ENCODE measurements at regions of chr6 and their contacts with region 1.

Region 1: DNA sequence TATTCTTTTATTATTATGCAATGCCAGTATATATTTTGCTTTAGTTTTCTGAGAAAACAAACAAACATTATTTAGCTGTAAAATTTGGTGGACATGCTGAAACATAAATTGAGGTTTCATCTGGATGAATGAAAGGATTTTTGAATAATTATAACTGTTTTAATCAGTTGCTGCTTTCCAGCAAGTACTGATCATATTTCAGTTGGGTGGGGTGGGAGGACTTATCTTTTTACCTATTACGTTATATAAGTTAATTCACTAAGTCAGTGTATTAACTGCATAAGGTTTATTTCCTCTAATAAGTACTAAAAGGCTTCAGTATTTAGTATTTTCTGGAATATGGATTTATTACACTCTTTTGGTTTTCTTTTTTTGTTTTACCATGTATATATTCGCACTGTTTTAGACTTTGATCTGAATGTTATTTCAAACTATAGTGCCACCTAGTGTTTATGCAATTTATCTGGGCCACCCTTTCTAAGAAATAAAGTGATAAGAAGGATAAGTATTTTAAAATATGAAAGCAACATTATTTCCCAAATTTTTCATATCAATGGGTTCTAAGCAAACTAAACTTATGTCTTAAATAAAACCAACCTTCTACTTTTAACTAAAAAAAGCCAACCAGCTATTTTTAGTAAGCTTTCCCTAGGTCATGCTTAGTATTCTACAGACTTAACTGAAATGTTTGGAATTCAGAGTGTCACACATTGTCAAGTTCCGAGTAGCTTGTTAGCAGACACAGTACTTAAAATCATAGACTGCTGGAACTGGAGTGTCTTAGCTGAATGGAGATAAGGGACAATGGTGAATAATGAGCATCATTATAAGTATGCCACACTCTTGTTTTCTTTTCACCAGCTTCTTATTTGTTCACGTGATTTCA is 105.4 kb upstream of the MCHR2 start:
- DNase-seq: no peak
- H3K4me3 ChIP-seq: no peak overlapping the region
- H3K27me3 ChIP-seq: no peaks in the 10 kb centered on the region
- CTCF ChIP-seq: peak; percentile 42

Region 2: GRCh38 chr6:99905209-99906106 is 194.0 kb before region 1 on chr6:
- CTCF ChIA-PET with region 1: interaction called, 26 read pairs
- POLR2A ChIA-PET with region 1: no interaction called
- DNase-seq: peak; percentile 15
- H3K4me3 ChIP-seq: no peak overlapping the region
- H3K27me3 ChIP-seq: no peaks in the 10 kb centered on the region
- CTCF ChIP-seq: peak; percentile 80

Region 3: DNA sequence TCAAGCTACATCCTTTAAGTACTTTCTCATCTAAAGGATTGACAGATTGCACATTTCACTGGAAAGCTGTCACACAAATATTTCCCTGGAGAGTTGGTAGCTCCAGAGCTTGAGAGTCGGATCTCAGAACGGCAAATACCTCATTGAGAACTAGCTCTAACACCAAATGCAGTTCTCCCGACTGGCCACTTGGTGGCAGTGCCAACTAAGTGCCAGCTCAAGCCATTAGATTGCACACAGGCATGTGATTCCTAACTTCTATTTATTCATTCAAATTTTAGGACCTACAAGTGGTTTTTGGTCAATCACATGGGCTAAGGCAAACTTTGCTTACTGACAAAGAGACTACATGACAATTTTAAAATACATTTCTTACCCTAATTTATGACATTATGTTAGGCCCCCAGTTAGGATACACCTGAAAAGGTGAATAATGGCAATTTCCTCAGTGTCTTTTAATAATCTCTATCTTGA is 97.5 kb before region 1 on chr6:
- CTCF ChIA-PET with region 1: interaction called, 145 read pairs
- POLR2A ChIA-PET with region 1: no interaction called
- DNase-seq: no peak
- H3K4me3 ChIP-seq: no peak overlapping the region
- H3K27me3 ChIP-seq: no peaks in the 10 kb centered on the region
- CTCF ChIP-seq: peak; percentile 94

Region 4: DNA sequence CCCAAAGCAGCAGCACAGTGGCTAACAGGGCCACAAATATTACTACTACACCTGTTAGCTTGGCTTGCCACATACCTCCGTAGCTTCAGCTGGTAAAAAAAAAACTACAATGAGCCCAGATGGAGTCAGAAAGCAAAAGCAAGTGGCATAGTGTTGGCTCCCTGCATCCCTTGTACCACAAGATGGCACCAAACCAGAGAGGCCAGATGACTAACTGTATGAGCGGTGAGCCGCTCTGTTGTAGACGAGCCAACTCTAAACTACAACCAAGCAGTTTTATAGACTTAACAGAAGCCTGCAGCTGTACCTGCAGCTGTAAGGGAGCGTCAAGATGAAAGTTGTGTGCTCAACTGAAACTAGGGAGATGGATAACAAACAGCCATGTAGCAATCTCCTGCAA is 20.9 kb before region 1 on chr6:
- CTCF ChIA-PET with region 1: interaction called, 15 read pairs
- POLR2A ChIA-PET with region 1: no interaction called
- DNase-seq: no peak
- H3K4me3 ChIP-seq: no peak overlapping the region
- H3K27me3 ChIP-seq: no peaks in the 10 kb centered on the region; the same call in none of the 2 replicates
- CTCF ChIP-seq: peak; percentile 68

Measured in BJ (cell line).